ENCODE measurements at regions of chr2 and their contacts with region 1.

Region 1: GRCh38 chr2:191066197-191066918 is 52.4 kb upstream of the STAT1 start:
- DNase-seq: peak in 1 of 5 donors; percentile 11
- H3K4me3 ChIP-seq: peak overlapping the region in 1 of 2 donors; percentile 4
- H3K4me3 Mint-ChIP-seq: peak overlapping the region; percentile 28 to 86 (median 74)
- H3K27ac ChIP-seq: peak overlapping the region; percentile 56
- H3K27ac Mint-ChIP-seq: peak overlapping the region; percentile 64 to 93 (median 87)
- H3K4me1 ChIP-seq: peaks cover 96% of the 10 kb centered on the region
- H3K4me1 Mint-ChIP-seq: peaks cover 66 to 86% (median 76%) of the 10 kb centered on the region in 4 donors
- H3K27me3 ChIP-seq: no peaks in the 10 kb centered on the region
- H3K27me3 Mint-ChIP-seq: no peaks in the 10 kb centered on the region

Region 2: DNA sequence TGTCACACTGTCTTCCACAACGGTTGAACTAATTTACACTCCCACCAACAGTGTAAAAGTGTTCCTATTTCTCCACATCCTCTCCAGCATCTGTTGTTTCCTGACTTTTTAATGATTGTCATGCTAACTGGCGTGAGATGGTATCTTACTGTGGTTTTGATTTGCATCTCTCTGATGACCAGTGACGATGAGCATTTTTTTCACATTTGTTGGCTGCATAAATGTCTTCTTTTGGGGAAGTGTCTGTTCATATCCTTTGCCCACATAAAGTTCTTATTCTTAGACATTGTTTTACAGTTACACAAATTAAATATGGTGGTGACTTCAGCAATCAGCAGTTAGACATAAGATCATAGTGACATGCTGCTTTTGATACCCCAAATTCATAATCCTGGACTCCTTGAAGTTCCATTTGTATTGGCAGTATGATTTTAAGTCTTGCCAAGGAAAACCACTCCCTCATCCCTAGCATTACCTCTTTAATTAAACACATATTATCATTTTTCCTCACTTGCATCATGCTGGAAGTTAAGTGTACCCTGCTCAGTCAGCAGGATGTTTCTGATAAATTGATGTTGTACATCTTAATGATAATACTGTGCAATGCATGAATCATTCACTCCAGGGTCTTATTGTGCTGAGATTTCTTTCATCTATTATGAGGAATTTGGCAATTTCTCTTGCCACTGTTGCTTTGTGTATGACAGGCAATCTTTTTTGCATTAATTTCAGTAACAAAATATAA is 15.2 kb after region 1 on chr2:
- CTCF ChIA-PET with region 1: no interaction called
- POLR2A ChIA-PET with region 1: interaction called, 5 read pairs
- intact Hi-C with region 1: loop called (anchors 2 kb)
- DNase-seq: no peak
- H3K4me3 ChIP-seq: no peak overlapping the region
- H3K4me3 Mint-ChIP-seq: no peak overlapping the region
- H3K27ac ChIP-seq: no peak overlapping the region
- H3K27ac Mint-ChIP-seq: peak overlapping the region in 6 of 7 donors; percentile 14 to 60 (median 54)
- H3K4me1 ChIP-seq: peaks cover 18% of the 10 kb centered on the region
- H3K4me1 Mint-ChIP-seq: peaks cover 20 to 50% (median 28%) of the 10 kb centered on the region in 4 donors
- H3K27me3 ChIP-seq: no peaks in the 10 kb centered on the region
- H3K27me3 Mint-ChIP-seq: no peaks in the 10 kb centered on the region

Region 3: GRCh38 chr2:191114403-191114886 is 48.1 kb after region 1 on chr2:
- CTCF ChIA-PET with region 1: interaction called, 5 read pairs
- POLR2A ChIA-PET with region 1: interaction called, 21 read pairs
- intact Hi-C with region 1: loop called (anchors 10 kb)
- DNase-seq: peak; percentile 43 to 71 (median 57)
- H3K4me3 ChIP-seq: peak overlapping the region in 1 of 2 donors; percentile 35
- H3K4me3 Mint-ChIP-seq: peak overlapping the region; percentile 53 to 78 (median 72)
- H3K27ac ChIP-seq: peak overlapping the region; percentile 55
- H3K27ac Mint-ChIP-seq: peak overlapping the region; percentile 89 to 97 (median 93)
- H3K4me1 ChIP-seq: peaks cover 50% of the 10 kb centered on the region
- H3K4me1 Mint-ChIP-seq: peaks cover 51 to 83% (median 67%) of the 10 kb centered on the region in 4 donors
- H3K27me3 ChIP-seq: no peaks in the 10 kb centered on the region
- H3K27me3 Mint-ChIP-seq: no peaks in the 10 kb centered on the region

Region 4: DNA sequence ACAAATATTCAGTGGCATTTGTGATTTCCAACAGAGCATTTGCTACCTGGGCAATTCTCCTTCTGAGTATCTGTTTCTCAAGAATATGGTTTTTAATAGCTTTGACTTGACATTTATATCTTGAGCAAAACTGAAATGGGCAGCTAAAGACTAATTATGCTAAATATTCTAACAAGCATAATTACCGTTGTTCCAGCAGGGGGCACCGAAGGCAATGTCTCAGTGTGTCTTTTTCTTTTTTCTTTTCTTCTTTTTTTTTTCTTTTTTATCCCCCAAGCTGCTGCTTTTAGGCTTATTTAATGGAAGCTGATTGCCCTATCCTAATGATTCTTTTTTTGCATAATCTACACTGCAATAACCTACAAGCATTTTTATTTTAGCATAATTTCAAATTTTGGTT is 472.7 kb after region 1 on chr2:
- CTCF ChIA-PET with region 1: no interaction called
- POLR2A ChIA-PET with region 1: no interaction called
- intact Hi-C with region 1: no loop called
- DNase-seq: peak in 3 of 5 donors; percentile 10 to 37 (median 16)
- H3K4me3 ChIP-seq: no peak overlapping the region
- H3K4me3 Mint-ChIP-seq: peak overlapping the region in 1 of 8 donors; percentile 49
- H3K27ac ChIP-seq: no peak overlapping the region
- H3K27ac Mint-ChIP-seq: no peak overlapping the region
- H3K4me1 ChIP-seq: no peaks in the 10 kb centered on the region
- H3K4me1 Mint-ChIP-seq: no peaks in the 10 kb centered on the region
- H3K27me3 ChIP-seq: no peaks in the 10 kb centered on the region
- H3K27me3 Mint-ChIP-seq: peaks cover 2% of the 10 kb centered on the region in 2 donors